ENCODE measurements at regions of chr19 and their contacts with region 1.

Region 1: GRCh38 chr19:4768934-4769777 is 22.4 kb upstream of the FEM1A start:
- DNase-seq: peak; percentile 92
- H3K4me3 Mint-ChIP-seq: no peak overlapping the region
- H3K27ac Mint-ChIP-seq: no peak overlapping the region
- H3K4me1 Mint-ChIP-seq: no peaks in the 10 kb centered on the region
- H3K27me3 Mint-ChIP-seq: peaks cover 4% of the 10 kb centered on the region

Region 2: GRCh38 chr19:4624733-4625362 is 144.3 kb before region 1 on chr19:
- CTCF ChIA-PET with region 1: no interaction called
- intact Hi-C with region 1: no loop called
- DNase-seq: no peak
- H3K4me3 Mint-ChIP-seq: no peak overlapping the region
- H3K27ac Mint-ChIP-seq: no peak overlapping the region
- H3K4me1 Mint-ChIP-seq: no peaks in the 10 kb centered on the region
- H3K27me3 Mint-ChIP-seq: peaks cover 7% of the 10 kb centered on the region

Region 3: GRCh38 chr19:4816202-4816949 is 47.2 kb after region 1 on chr19:
- CTCF ChIA-PET with region 1: no interaction called
- intact Hi-C with region 1: no loop called
- DNase-seq: no peak
- H3K4me3 Mint-ChIP-seq: no peak overlapping the region
- H3K27ac Mint-ChIP-seq: no peak overlapping the region
- H3K4me1 Mint-ChIP-seq: peaks cover 16% of the 10 kb centered on the region
- H3K27me3 Mint-ChIP-seq: no peaks in the 10 kb centered on the region

Region 4: GRCh38 chr19:5403968-5404640 is 634.9 kb after region 1 on chr19:
- CTCF ChIA-PET with region 1: no interaction called
- intact Hi-C with region 1: loop called (anchors 5 kb)
- DNase-seq: peak; percentile 84
- H3K4me3 Mint-ChIP-seq: no peak overlapping the region
- H3K27ac Mint-ChIP-seq: no peak overlapping the region
- H3K4me1 Mint-ChIP-seq: no peaks in the 10 kb centered on the region
- H3K27me3 Mint-ChIP-seq: peaks cover 14% of the 10 kb centered on the region

Measured in activated naive CD4-positive, alpha-beta T cell treated with anti-CD3 and anti-CD28 coated beads for 36 hours (primary cell).